ENCODE measurements at regions of chr6 and their contacts with region 1.

Region 1: GRCh38 chr6:42537536-42537935 is 26.3 kb upstream of the UBR2 start:
- DNase-seq: no peak
- H3K27ac ChIP-seq: no peak overlapping the region
- CTCF ChIP-seq: no peak

Region 2: DNA sequence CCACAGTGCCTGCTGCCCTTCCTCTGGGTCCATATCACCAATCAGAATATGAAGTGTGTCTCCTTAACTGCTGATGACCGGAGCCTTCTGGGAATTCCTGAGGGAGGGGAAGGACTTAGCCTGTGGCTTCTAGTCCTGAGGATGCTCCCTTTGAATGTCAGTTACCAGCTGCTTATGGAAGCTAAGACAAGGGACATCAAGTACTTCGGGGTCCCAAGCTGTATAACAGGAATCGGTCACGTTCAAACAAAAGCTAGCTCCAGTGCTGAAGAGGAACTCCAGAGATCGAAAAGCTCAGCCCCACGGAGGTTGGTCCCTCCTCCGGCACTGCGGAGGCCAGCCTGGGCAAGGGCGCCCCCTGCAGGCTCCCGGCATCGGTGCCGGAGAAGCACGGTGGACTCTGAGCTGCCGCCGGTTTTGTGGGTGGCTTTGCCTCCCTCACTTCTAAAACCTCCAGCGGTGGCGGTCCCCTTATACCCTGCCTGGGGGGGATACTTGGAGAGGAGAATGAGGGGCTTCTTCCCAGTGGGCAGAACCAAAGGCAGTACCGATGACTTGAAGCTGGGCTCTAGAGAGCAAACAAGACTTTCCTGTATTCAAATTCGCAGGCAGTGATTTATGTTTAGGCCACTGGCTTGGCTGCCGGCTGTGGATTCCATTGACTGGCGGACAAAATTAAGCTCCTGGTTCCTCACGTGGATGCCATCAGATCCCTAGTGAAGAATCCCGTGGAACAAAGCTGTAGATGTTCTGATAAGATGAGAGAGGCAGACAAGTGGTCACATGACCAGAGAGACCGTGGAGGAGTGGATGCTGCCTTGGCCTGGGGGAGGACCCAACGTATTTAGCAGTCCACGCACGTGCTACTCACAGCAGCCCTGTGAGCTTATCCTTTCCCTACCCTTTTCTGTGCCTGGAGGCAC is 10.1 kb after region 1 on chr6:
- CTCF ChIA-PET with region 1: interaction called, 18 read pairs
- POLR2A ChIA-PET with region 1: no interaction called
- DNase-seq: peak; percentile 72
- H3K27ac ChIP-seq: peak overlapping the region; percentile 40
- CTCF ChIP-seq: peak; percentile 92

Measured in RWPE1 (cell line).